CD8-positive, alpha-beta T cell (primary cell): ENCODE measurements at regions of chr5 and their contacts with region 1.

Region 1: GRCh38 chr5:65925601-65926275 is 637 bp upstream of the ERBIN start:
- DNase-seq: peak in 8 of 9 experiments; percentile 57 to 94 (median 79)
- ATAC-seq: peak; percentile 67
- H3K4me3 ChIP-seq: peak overlapping the region; percentile 67 to 84
- H3K4me3 Mint-ChIP-seq: peak overlapping the region; percentile 91
- H3K27ac ChIP-seq: peak overlapping the region; percentile 84 to 93
- H3K27ac Mint-ChIP-seq: peak overlapping the region; percentile 95
- H3K4me1 ChIP-seq: peaks cover 26% of the 10 kb centered on the region
- H3K4me1 Mint-ChIP-seq: peaks cover 42% of the 10 kb centered on the region
- H3K27me3 ChIP-seq: no peaks in the 10 kb centered on the region
- H3K27me3 Mint-ChIP-seq: no peaks in the 10 kb centered on the region
- CTCF ChIP-seq: no peak

Region 2: DNA sequence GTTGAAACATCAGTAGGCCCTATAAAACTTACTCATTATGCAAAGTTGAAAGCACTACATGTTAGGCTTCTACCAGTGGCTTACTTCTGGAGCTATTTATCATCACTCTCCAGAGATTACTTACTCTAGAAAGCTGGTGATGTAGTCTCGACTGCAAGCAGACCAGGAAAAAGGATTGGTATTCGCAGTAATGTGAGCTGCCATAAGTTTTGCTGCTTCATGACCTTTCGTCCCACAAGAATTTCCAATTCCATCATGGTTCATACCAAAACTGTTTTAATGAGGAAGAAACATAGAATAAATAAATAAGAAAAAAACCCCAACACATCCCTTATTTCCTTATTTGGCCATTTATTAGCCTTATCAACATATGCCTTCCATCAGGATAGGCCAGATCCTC is 625.9 kb before region 1 on chr5:
- CTCF ChIA-PET with region 1: no interaction called
- POLR2A ChIA-PET with region 1: no interaction called
- intact Hi-C with region 1: no loop called
- DNase-seq: no peak
- ATAC-seq: no peak
- H3K4me3 ChIP-seq: no peak overlapping the region
- H3K4me3 Mint-ChIP-seq: no peak overlapping the region
- H3K27ac ChIP-seq: no peak overlapping the region
- H3K27ac Mint-ChIP-seq: no peak overlapping the region
- H3K4me1 ChIP-seq: no peaks in the 10 kb centered on the region
- H3K4me1 Mint-ChIP-seq: no peaks in the 10 kb centered on the region
- H3K27me3 ChIP-seq: no peaks in the 10 kb centered on the region
- H3K27me3 Mint-ChIP-seq: no peaks in the 10 kb centered on the region
- CTCF ChIP-seq: no peak

Region 3: DNA sequence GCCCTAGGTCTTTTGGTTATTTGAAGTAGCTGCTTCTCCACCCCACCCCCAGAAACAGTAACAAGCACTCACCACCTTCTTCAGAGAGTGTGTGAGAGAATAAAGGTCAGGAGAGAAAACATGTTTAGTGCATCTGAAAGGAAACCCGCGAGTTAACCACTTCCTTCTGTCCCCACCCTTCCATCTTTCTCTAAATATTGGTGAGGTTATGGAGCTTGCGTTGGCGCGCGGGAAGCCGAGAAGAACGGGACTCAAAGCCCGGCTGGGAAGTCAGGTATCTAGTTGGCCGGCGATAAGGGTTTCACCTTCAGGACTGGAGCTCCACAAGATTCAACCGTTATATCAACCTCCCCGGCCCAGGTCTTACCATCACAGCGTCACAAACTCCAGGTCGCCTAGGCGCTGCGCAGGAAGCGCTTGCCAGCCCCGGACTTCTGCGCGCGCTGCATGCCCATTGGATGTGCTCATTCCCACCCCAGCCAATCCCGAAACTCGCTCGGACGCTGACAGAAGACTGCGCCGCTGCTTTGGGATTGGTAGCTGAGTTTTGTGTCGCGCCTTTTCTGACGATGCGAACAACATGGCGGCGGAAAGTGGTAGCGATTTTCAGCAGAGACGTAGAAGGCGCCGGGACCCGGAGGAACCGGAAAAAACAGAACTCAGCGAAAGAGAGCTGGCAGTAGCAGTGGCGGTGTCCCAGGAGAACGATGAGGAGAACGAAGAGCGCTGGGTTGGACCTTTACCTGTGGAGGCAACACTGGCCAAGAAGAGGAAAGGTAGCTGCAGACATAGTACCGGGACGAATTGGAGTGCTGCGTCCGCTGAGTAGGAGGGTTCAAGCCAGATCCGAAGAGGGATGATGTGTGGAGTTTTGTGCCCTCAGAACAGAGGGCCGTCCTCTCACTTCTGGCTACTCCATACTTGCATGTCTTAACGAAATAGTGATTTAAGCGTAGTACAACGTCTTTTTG is 362.7 kb before region 1 on chr5 and contains the starts of genes CENPK and PPWD1:
- CTCF ChIA-PET with region 1: no interaction called
- POLR2A ChIA-PET with region 1: interaction called, 6 read pairs
- intact Hi-C with region 1: loop called (anchors 5 to 10 kb)
- DNase-seq: peak; percentile 83 to 98 (median 95)
- ATAC-seq: peak; percentile 97
- H3K4me3 ChIP-seq: peak within 1 kb of the TSS; percentile 74 to 82
- H3K4me3 Mint-ChIP-seq: peak within 1 kb of the TSS; percentile 100
- H3K27ac ChIP-seq: peak within 1 kb of the TSS; percentile 97 to 98
- H3K27ac Mint-ChIP-seq: peak within 1 kb of the TSS; percentile 100
- H3K4me1 ChIP-seq: peaks cover 37% of the 10 kb centered on the region
- H3K4me1 Mint-ChIP-seq: peaks cover 42% of the 10 kb centered on the region
- H3K27me3 ChIP-seq: no peaks in the 10 kb centered on the region
- H3K27me3 Mint-ChIP-seq: no peaks in the 10 kb centered on the region
- CTCF ChIP-seq: no peak
- total RNA-seq, gene CENPK: 5.1 to 5.3 TPM
- total RNA-seq, gene PPWD1: 78.8 to 81.5 TPM

Region 4: DNA sequence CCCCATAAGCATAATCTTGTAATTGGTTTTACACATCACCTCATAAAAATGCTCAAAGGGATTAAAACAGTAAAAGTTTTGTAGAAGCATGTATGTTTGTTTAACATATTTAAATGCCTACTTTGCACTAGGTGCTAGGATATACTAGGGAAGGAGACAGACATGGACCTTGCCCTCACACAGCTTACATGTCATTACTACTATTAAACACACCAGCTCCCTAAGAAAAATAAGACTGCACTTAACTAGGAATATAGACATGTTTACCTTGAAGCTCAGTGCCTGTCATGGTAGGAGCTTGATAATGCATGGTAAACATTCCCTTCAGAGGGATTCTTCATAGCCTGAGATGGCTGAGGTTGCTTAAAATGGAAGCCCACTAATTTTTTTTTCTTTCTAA is 294.8 kb before region 1 on chr5:
- CTCF ChIA-PET with region 1: no interaction called
- POLR2A ChIA-PET with region 1: no interaction called
- intact Hi-C with region 1: no loop called
- DNase-seq: no peak
- ATAC-seq: no peak
- H3K4me3 ChIP-seq: no peak overlapping the region
- H3K4me3 Mint-ChIP-seq: no peak overlapping the region
- H3K27ac ChIP-seq: no peak overlapping the region
- H3K27ac Mint-ChIP-seq: no peak overlapping the region
- H3K4me1 ChIP-seq: peaks cover 4% of the 10 kb centered on the region
- H3K4me1 Mint-ChIP-seq: peaks cover 25% of the 10 kb centered on the region
- H3K27me3 ChIP-seq: no peaks in the 10 kb centered on the region
- H3K27me3 Mint-ChIP-seq: no peaks in the 10 kb centered on the region
- CTCF ChIP-seq: no peak

Region 5: GRCh38 chr5:65721720-65722574 is 203.8 kb before region 1 on chr5 and contains the starts of genes NLN and SGTB:
- CTCF ChIA-PET with region 1: interaction called, 3 read pairs
- POLR2A ChIA-PET with region 1: interaction called, 29 read pairs
- intact Hi-C with region 1: loop called (anchors 2 to 5 kb)
- DNase-seq: peak; percentile 72 to 90 (median 84)
- ATAC-seq: peak; percentile 91
- H3K4me3 ChIP-seq: peak within 1 kb of the TSS; percentile 82 to 86
- H3K4me3 Mint-ChIP-seq: peak within 1 kb of the TSS; percentile 89
- H3K27ac ChIP-seq: peak within 1 kb of the TSS; percentile 78 to 86
- H3K27ac Mint-ChIP-seq: peak within 1 kb of the TSS; percentile 94
- H3K4me1 ChIP-seq: peaks cover 44% of the 10 kb centered on the region
- H3K4me1 Mint-ChIP-seq: peaks cover 25% of the 10 kb centered on the region
- H3K27me3 ChIP-seq: no peaks in the 10 kb centered on the region
- H3K27me3 Mint-ChIP-seq: no peaks in the 10 kb centered on the region
- CTCF ChIP-seq: no peak
- total RNA-seq, gene NLN: 1.4 to 1.5 TPM
- total RNA-seq, gene SGTB: 77.9 to 79.5 TPM

Region 6: GRCh38 chr5:65961633-65962032 is 35.9 kb after region 1 on chr5:
- CTCF ChIA-PET with region 1: no interaction called
- POLR2A ChIA-PET with region 1: no interaction called
- intact Hi-C with region 1: loop called (anchors 5 kb)
- DNase-seq: peak in 2 of 9 experiments; percentile 13 to 26
- ATAC-seq: peak; percentile 54
- H3K4me3 ChIP-seq: no peak overlapping the region
- H3K4me3 Mint-ChIP-seq: peak overlapping the region; percentile 9
- H3K27ac ChIP-seq: no peak overlapping the region
- H3K27ac Mint-ChIP-seq: peak overlapping the region; percentile 50
- H3K4me1 ChIP-seq: peaks cover 35% of the 10 kb centered on the region
- H3K4me1 Mint-ChIP-seq: peaks cover 72% of the 10 kb centered on the region
- H3K27me3 ChIP-seq: no peaks in the 10 kb centered on the region
- H3K27me3 Mint-ChIP-seq: no peaks in the 10 kb centered on the region
- CTCF ChIP-seq: no peak

Region 7: GRCh38 chr5:66010476-66010875 is 84.7 kb after region 1 on chr5:
- CTCF ChIA-PET with region 1: no interaction called
- POLR2A ChIA-PET with region 1: interaction called, 3 read pairs
- intact Hi-C with region 1: loop called (anchors 5 kb)
- DNase-seq: peak in 2 of 9 experiments; percentile 17 to 54
- ATAC-seq: peak; percentile 85
- H3K4me3 ChIP-seq: no peak overlapping the region
- H3K4me3 Mint-ChIP-seq: no peak overlapping the region
- H3K27ac ChIP-seq: peak overlapping the region in 1 of 2 experiments; percentile 37
- H3K27ac Mint-ChIP-seq: peak overlapping the region; percentile 88
- H3K4me1 ChIP-seq: peaks cover 25% of the 10 kb centered on the region
- H3K4me1 Mint-ChIP-seq: peaks cover 52% of the 10 kb centered on the region
- H3K27me3 ChIP-seq: no peaks in the 10 kb centered on the region
- H3K27me3 Mint-ChIP-seq: no peaks in the 10 kb centered on the region
- CTCF ChIP-seq: no peak

Region 8: GRCh38 chr5:66113160-66113559 is 187.4 kb after region 1 on chr5:
- CTCF ChIA-PET with region 1: no interaction called
- POLR2A ChIA-PET with region 1: no interaction called
- intact Hi-C with region 1: no loop called
- DNase-seq: no peak
- ATAC-seq: no peak
- H3K4me3 ChIP-seq: no peak overlapping the region
- H3K4me3 Mint-ChIP-seq: no peak overlapping the region
- H3K27ac ChIP-seq: no peak overlapping the region
- H3K27ac Mint-ChIP-seq: no peak overlapping the region
- H3K4me1 ChIP-seq: no peaks in the 10 kb centered on the region
- H3K4me1 Mint-ChIP-seq: no peaks in the 10 kb centered on the region
- H3K27me3 ChIP-seq: no peaks in the 10 kb centered on the region
- H3K27me3 Mint-ChIP-seq: no peaks in the 10 kb centered on the region
- CTCF ChIP-seq: no peak